ENCODE measurements at regions of chr11 and their contacts with region 1.

Region 1: DNA sequence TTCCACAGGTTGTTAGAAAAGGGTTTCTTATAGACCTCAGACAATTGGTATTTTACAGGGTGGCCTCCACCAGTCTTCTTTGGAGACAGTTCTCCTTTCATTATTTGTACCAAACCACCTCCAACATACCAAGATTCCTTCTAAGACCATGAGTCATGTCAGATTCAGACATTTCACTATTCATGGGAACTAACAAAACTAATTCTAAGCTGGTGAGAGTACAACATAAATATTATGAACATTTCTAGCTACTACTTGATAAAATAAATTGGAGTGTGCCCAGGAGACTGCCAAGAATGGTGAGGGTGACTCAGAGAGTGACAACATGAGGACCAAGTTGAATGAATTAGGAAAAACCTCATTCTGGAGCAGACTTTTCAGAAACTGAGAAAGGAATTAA is 494.6 kb upstream of the LRRC4C start:
- DNase-seq: no peak
- ATAC-seq: peak; percentile 5
- H3K4me3 ChIP-seq: no peak overlapping the region
- H3K27ac ChIP-seq: no peak overlapping the region
- H3K4me1 ChIP-seq: peaks cover 0 to 3% of the 10 kb centered on the region in 2 donors
- H3K27me3 ChIP-seq: no peaks in the 10 kb centered on the region

Region 2: DNA sequence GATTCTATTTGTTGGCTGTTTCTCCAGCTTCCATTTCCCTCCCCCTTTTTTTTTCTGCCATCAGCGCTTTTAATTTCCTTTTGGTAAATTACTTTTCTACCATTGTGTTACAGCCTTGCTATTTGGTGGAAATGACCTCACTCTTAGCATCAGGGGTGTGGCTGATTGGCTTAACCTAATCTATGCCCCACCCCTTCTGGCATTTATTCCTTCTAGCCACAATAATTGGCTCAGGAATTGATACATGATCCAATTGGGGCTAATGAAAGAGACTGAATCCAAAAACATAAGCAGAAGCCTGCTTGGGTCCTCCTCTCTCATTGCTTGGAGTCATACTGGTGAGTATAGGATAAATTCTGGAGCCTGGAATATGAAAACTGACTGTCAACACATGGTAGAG is 92.2 kb before region 1 on chr11:
- intact Hi-C with region 1: no loop called
- DNase-seq: no peak
- ATAC-seq: no peak
- H3K4me3 ChIP-seq: no peak overlapping the region
- H3K27ac ChIP-seq: no peak overlapping the region
- H3K4me1 ChIP-seq: no peaks in the 10 kb centered on the region
- H3K27me3 ChIP-seq: no peaks in the 10 kb centered on the region

Region 3: GRCh38 chr11:42013656-42014201 is 59.7 kb after region 1 on chr11:
- intact Hi-C with region 1: loop called in 1 of 2 experiments (anchors 10 kb)
- DNase-seq: no peak
- ATAC-seq: no peak
- H3K4me3 ChIP-seq: no peak overlapping the region
- H3K27ac ChIP-seq: no peak overlapping the region
- H3K4me1 ChIP-seq: no peaks in the 10 kb centered on the region
- H3K27me3 ChIP-seq: no peaks in the 10 kb centered on the region

Region 4: GRCh38 chr11:42397483-42397882 is 443.4 kb after region 1 on chr11:
- intact Hi-C with region 1: no loop called
- DNase-seq: no peak
- ATAC-seq: no peak
- H3K4me3 ChIP-seq: no peak overlapping the region
- H3K27ac ChIP-seq: no peak overlapping the region
- H3K4me1 ChIP-seq: no peaks in the 10 kb centered on the region
- H3K27me3 ChIP-seq: no peaks in the 10 kb centered on the region